ENCODE measurements at regions of chr2 and their contacts with region 1.

Region 1: DNA sequence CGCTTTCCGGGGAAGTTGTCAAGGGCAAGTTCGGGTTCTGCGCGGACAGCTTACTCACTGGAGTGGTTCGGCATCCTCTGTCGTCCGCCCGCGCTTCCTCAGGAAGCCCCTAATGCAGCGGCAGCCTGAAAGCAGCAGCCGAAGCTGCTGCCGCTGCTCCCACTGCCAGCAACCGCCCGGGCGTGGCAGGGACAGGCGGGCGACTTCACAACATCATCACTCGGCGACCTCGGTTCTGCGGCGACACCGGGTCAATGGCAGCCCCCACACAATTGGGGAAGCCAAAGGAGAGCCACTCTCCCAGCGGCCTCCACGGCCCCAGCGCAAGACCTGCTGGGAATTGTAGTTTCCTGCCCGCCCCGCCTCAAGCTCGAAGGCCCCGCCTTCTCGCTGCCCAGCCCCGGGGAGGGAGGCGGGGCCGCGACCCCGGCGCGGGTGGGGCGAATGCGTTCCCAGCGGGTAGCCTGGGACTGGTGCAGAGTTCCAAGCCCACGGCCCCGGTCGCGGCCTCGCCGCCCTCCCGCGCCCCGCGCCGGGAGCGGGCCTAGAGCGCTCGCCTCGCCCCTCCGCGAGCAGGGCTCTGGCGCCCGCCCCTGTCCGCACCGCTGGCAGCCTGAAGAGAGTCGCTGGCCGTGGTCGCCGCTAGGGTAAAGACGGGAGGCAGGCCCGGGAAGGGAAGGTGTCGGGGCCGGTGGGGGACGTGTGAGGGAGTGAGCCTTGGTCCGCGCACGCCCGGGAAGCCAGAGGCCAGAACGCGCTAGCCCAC is at the starts of genes STRADB and TRAK2:
- DNase-seq: peak; percentile 97
- ATAC-seq: peak; percentile 96
- total RNA-seq, gene STRADB: 84.3 TPM
- total RNA-seq, gene TRAK2: 163 TPM

Region 2: DNA sequence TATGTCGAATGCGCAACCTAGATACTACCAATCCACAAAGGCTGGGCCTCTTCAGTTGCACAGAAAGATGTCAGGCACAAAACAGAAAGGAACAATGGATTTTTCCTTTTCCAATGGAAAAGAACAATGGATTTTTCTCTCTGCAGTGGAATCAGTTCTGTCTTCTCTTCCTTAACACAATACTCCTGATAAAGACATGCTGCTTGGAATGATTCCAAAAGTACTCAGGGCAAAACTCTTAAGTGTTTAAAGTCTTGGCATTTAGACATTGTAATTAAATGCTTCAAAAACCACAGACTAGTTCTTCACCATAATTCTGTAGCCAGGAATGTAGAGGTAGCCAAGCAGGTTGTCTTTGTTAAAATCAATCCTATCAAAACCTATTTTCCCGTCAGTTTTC is 47.6 kb before region 1 on chr2:
- intact Hi-C with region 1: loop called (anchors 5 kb)
- DNase-seq: no peak
- ATAC-seq: no peak

Measured in Right ventricle myocardium superior (tissue), 1 donor.